CD14-positive monocyte (primary cell): ENCODE measurements at regions of chr4 and their contacts with region 1.

Region 1: GRCh38 chr4:87006676-87007527 is 72.1 kb downstream of the AFF1 start:
- DNase-seq: peak; percentile 87 to 91 (median 91)
- H3K4me3 ChIP-seq: peak overlapping the region; percentile 78 to 98 (median 88)
- H3K4me3 Mint-ChIP-seq: peak overlapping the region; percentile 98
- H3K27ac ChIP-seq: peak overlapping the region; percentile 87 to 99
- H3K27ac Mint-ChIP-seq: peak overlapping the region; percentile 93 to 97 (median 97)
- H3K4me1 ChIP-seq: peaks cover 50 to 63% of the 10 kb centered on the region in 2 donors
- H3K4me1 Mint-ChIP-seq: peaks cover 51% of the 10 kb centered on the region
- H3K27me3 ChIP-seq: no peaks in the 10 kb centered on the region
- H3K27me3 Mint-ChIP-seq: peaks cover 0 to 1% (median 0%) of the 10 kb centered on the region in 3 donors
- CTCF ChIP-seq: peak; percentile 34

Region 2: GRCh38 chr4:86630629-86631028 is 376.3 kb before region 1 on chr4:
- intact Hi-C with region 1: no loop called
- DNase-seq: no peak
- H3K4me3 ChIP-seq: no peak overlapping the region
- H3K4me3 Mint-ChIP-seq: no peak overlapping the region
- H3K27ac ChIP-seq: no peak overlapping the region
- H3K27ac Mint-ChIP-seq: no peak overlapping the region
- H3K4me1 ChIP-seq: no peaks in the 10 kb centered on the region
- H3K4me1 Mint-ChIP-seq: no peaks in the 10 kb centered on the region
- H3K27me3 ChIP-seq: no peaks in the 10 kb centered on the region
- H3K27me3 Mint-ChIP-seq: peaks cover 0 to 3% (median 2%) of the 10 kb centered on the region in 3 donors
- CTCF ChIP-seq: no peak

Region 3: DNA sequence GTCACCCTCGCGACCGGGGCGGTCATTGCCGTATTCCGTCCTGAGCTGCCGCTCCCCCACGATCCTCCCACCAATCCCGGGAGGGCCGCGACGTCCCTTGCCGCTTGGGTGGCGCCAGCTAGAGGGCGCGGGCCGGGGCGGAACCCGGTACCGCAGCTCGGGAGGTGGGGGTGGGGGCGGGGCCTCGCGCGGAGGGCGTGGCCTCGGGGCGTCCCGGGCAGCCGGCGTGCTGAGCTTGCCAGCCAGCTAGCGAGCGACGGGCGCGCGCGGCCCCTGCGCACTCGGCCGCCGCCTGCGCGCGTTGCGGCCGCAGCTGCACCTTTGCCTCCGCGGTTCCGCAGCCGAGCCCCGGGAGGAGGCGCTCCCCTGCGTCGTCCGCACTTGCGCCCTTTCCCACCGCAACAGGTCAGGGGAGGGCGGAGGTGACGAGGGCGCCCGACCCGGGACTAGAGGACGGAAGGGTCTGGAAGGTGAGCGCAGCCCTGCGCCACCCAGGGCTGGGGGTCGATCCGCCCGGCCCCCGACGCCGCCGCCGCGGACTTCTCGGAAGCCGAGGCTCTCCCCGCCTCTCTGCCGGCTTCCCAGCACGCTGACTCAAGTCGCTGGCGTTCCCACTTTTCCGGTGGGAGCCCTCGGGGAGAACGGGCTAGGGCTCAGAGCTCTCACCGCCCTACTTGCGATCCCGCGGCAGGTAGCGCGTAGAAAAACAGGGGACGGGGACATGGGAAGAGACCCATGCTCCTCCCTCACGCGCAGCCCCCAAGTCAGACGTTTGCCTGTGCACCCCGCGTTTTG is 71.9 kb before region 1 on chr4 and contains the start of gene AFF1:
- intact Hi-C with region 1: loop called (anchors 2 to 5 kb)
- DNase-seq: peak; percentile 88 to 93 (median 92)
- H3K4me3 ChIP-seq: peak within 1 kb of the TSS; percentile 96 to 98 (median 98)
- H3K4me3 Mint-ChIP-seq: peak within 1 kb of the TSS; percentile 97 to 99
- H3K27ac ChIP-seq: peak within 1 kb of the TSS; percentile 85 to 91
- H3K27ac Mint-ChIP-seq: peak within 1 kb of the TSS; percentile 93 to 98 (median 96)
- H3K4me1 ChIP-seq: peaks cover 50 to 52% of the 10 kb centered on the region in 2 donors
- H3K4me1 Mint-ChIP-seq: peaks cover 45% of the 10 kb centered on the region
- H3K27me3 ChIP-seq: no peaks in the 10 kb centered on the region
- H3K27me3 Mint-ChIP-seq: no peaks in the 10 kb centered on the region
- CTCF ChIP-seq: peak; percentile 36
- polyA plus RNA-seq, gene AFF1: 7.5 to 20.9 (median 16.3) TPM

Region 4: DNA sequence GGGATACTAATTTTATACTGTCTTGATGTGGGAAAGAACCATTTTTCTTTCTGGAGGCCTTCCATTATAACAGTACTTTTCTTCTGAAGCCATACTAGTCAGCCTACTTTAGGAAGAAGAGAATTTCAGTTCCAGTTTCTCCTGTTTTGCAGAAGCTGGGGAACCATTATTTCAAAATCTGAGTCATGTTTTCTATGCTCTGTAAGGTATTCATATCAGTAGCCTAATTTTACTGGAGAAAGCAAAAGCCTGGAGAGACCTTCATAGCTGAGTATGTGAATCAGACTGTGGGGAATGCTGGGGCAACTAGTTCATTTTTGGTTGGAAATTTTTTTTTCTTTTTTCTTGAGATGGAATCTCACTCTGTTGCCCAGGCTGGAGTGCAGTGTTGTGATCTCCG is 49.7 kb before region 1 on chr4:
- intact Hi-C with region 1: loop called in 1 of 2 experiments (anchors 5 kb)
- DNase-seq: peak; percentile 49 to 74 (median 67)
- H3K4me3 ChIP-seq: peak overlapping the region in 1 of 3 experiments; percentile 44
- H3K4me3 Mint-ChIP-seq: peak overlapping the region in 1 of 2 donors; percentile 66
- H3K27ac ChIP-seq: peak overlapping the region; percentile 30 to 54
- H3K27ac Mint-ChIP-seq: peak overlapping the region; percentile 58 to 89 (median 84)
- H3K4me1 ChIP-seq: peaks cover 53 to 63% of the 10 kb centered on the region in 2 donors
- H3K4me1 Mint-ChIP-seq: peaks cover 55% of the 10 kb centered on the region
- H3K27me3 ChIP-seq: no peaks in the 10 kb centered on the region
- H3K27me3 Mint-ChIP-seq: peaks cover 0 to 2% (median 0%) of the 10 kb centered on the region in 3 donors
- CTCF ChIP-seq: no peak

Region 5: DNA sequence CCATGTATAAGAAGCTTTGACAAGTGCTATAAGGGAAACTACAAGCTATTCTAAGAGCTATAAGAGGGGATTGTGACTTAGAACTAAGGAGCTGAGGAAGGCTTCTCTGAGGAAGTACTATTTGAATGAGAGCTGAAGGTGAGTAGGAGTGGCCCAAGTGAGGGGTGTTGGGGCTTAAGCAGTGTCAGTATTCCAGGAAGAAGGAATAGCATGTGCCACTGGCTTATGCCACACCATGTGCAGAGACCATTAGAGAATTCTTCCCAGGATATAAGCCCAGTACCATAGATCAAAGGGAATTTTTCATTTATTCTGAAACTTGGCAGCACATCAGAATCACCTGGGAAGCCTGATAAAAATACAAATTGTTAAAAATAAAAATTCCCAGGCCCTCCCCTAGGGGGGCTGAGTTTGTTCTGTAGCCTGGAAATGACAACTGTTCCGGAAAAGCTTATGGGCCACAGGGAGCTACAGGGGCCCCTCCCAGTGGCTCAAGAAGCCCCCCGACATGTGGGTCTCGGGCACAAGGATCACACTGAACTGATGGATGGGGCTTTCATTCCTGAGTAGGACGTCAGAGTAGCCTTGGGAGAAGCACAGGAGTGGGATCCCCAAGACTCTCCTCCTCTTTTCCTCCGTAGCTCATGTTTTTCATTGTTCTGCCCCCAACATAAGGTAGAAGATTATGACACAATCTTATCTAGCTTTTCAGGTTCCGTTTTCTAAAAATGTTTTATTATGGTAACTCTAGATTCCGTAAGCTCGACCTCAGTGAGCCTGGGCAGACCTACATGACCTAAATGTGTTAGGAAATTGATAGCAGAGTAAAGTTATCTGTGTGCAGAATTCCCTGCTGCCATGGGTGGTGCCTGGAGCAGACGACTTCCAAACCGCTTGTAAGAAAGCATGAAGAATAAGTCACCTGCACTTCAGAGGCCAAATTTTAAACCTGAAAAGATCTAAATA is 47.2 kb after region 1 on chr4:
- intact Hi-C with region 1: loop called in 1 of 2 experiments (anchors 5 kb)
- DNase-seq: no peak
- H3K4me3 ChIP-seq: peak overlapping the region in 1 of 3 experiments; percentile 21
- H3K4me3 Mint-ChIP-seq: no peak overlapping the region
- H3K27ac ChIP-seq: peak overlapping the region in 1 of 2 donors; percentile 35
- H3K27ac Mint-ChIP-seq: peak overlapping the region; percentile 32 to 80 (median 70)
- H3K4me1 ChIP-seq: peaks cover 42 to 58% of the 10 kb centered on the region in 2 donors
- H3K4me1 Mint-ChIP-seq: peaks cover 83% of the 10 kb centered on the region
- H3K27me3 ChIP-seq: no peaks in the 10 kb centered on the region
- H3K27me3 Mint-ChIP-seq: peaks cover 0 to 1% (median 0%) of the 10 kb centered on the region in 3 donors
- CTCF ChIP-seq: no peak

Region 6: DNA sequence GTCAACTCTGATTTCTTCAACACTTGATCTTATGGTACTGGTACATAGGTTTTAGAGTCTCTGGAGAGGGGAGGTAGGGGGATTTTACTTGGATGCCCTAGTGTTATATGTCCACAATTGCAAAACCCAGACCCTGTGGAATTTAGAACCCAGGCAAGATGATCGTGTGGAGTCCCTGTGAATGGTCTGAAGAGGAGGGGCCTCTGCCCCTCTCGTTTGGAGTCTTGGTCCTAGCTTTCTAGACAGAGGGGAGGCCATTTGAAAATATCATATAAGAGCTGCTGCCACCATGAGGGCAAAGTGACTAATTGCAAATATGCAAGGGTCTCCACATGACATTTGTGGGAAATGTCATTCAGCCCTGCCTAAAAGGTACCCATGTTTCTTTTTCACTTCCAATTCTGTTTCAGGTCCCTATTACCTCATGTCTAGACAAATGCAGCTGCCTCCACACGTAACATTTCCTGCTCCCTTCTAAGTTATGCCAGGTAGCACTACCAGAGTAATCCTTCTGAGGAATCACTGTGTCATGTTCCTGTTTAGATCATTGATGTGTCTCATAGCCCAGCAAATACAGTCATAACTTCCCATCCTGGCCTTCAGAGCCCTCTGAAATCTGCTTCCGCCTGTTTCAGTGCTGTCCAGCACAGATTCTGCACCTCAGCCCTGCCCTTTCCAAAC is 86.7 kb after region 1 on chr4:
- intact Hi-C with region 1: loop called in 1 of 2 experiments (anchors 10 kb)
- DNase-seq: peak; percentile 18 to 45 (median 44)
- H3K4me3 ChIP-seq: no peak overlapping the region
- H3K4me3 Mint-ChIP-seq: no peak overlapping the region
- H3K27ac ChIP-seq: peak overlapping the region in 1 of 2 donors; percentile 42
- H3K27ac Mint-ChIP-seq: peak overlapping the region; percentile 20 to 84 (median 77)
- H3K4me1 ChIP-seq: peaks cover 7 to 19% of the 10 kb centered on the region in 2 donors
- H3K4me1 Mint-ChIP-seq: peaks cover 21% of the 10 kb centered on the region
- H3K27me3 ChIP-seq: no peaks in the 10 kb centered on the region
- H3K27me3 Mint-ChIP-seq: no peaks in the 10 kb centered on the region
- CTCF ChIP-seq: peak; percentile 80